Endothelial cell of umbilical vein (primary cell): ENCODE measurements at regions of chr17 and their contacts with region 1.

Region 1: DNA sequence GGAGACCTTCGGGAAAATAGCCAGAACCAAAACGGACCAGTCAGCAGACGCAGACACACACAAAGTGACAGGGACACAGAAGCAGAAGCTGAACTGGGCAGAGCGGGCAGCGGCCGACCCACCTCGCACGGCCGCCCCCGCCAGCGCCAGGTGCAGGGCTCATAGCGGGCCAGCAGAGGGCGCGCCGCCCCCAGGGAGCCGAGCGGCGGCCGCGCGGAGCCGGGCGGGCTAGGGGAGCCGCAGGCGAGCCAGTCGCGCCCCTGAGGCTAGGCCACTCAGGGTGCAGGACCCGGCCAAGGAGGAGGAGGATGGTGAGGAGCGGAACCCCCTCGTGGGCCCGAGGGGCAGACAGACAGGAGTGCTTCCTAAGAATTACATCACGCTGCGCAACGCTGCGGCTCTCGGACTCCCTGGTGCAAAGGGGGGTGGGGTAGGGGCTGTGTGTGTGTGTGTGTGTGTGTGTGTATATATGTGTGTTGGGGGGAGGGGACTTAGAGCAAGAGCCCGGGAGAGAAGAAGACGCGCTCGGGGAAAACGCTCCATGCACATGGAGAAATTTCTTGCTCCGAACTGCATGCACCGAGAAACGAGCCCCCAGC is 913 bp upstream of the NOG start:
- DNase-seq: peak; percentile 45
- H3K4me3 ChIP-seq: peak overlapping the region; percentile 46 to 66 (median 48)
- H3K27ac ChIP-seq: no peak overlapping the region
- H3K4me1 ChIP-seq: peaks cover 21% of the 10 kb centered on the region
- H3K27me3 ChIP-seq: peaks cover 41 to 54% of the 10 kb centered on the region in 2 experiments
- CTCF ChIP-seq: peak; percentile 77 to 88
- POLR2A ChIP-seq: no peak

Region 2: GRCh38 chr17:56499799-56500388 is 92.7 kb before region 1 on chr17:
- CTCF ChIA-PET with region 1: interaction called, 12 read pairs
- POLR2A ChIA-PET with region 1: no interaction called
- dilution Hi-C with region 1: no loop called
- intact Hi-C with region 1: loop called (anchors 5 kb)
- DNase-seq: peak; percentile 47
- H3K4me3 ChIP-seq: no peak overlapping the region
- H3K27ac ChIP-seq: no peak overlapping the region
- H3K4me1 ChIP-seq: no peaks in the 10 kb centered on the region
- H3K27me3 ChIP-seq: peaks cover 2 to 9% of the 10 kb centered on the region in 2 experiments
- CTCF ChIP-seq: peak; percentile 25 to 33
- POLR2A ChIP-seq: no peak

Region 3: GRCh38 chr17:56679115-56679766 is 86.7 kb after region 1 on chr17:
- CTCF ChIA-PET with region 1: interaction called, 10 read pairs
- POLR2A ChIA-PET with region 1: no interaction called
- dilution Hi-C with region 1: no loop called
- intact Hi-C with region 1: loop called (anchors 1 kb)
- DNase-seq: peak; percentile 54
- H3K4me3 ChIP-seq: peak overlapping the region; percentile 19 to 58 (median 21)
- H3K27ac ChIP-seq: no peak overlapping the region
- H3K4me1 ChIP-seq: peaks cover 32% of the 10 kb centered on the region
- H3K27me3 ChIP-seq: peaks cover 27 to 38% of the 10 kb centered on the region in 2 experiments
- CTCF ChIP-seq: peak; percentile 60 to 61
- POLR2A ChIP-seq: no peak

Region 4: DNA sequence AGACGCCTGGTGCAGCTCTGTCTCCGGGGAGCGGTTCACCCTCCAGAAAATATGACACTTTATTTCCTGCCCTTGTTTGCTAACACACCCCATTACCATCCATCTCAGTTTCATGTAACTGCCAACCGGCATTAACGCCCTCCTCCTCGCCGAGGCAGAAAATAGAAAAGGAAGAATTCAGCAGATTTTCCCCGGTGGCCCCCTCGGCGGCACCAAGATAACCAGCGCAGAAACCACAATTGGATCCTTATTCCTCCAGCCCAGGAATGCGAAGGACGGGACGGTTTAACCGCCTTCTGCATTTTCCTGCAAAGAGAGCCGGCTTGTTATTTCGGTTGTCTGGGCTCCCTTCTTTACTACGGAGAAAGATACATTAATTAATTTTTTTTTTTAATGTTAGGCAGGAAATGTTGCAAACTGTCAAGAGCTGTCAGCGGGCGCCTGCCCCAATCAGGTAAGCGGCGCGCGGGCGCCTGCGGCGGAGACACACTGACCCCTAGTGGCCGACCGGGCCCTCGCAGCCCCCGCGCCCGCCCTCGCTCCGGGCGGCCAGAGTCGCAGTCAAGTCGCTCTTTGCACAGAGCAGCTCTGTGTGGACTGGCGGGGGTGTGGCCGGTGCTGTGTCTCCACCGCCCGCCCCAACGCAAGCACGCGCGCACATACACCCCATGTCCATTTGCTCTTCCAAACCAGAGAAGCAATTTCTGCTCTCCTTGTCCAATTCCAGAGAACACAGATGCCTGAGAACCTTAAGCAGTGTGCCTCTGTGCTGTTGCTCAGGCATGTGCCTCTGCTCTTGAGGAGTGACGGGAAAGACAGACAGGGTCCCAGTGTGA is 187.5 kb after region 1 on chr17:
- CTCF ChIA-PET with region 1: interaction called, 70 read pairs
- POLR2A ChIA-PET with region 1: interaction called, 6 read pairs
- dilution Hi-C with region 1: no loop called
- intact Hi-C with region 1: loop called (anchors 1 kb)
- DNase-seq: peak; percentile 79
- H3K4me3 ChIP-seq: peak overlapping the region in 2 of 3 experiments; percentile 23 to 54
- H3K27ac ChIP-seq: no peak overlapping the region
- H3K4me1 ChIP-seq: peaks cover 11% of the 10 kb centered on the region
- H3K27me3 ChIP-seq: peaks cover 0 to 5% of the 10 kb centered on the region in 2 experiments
- CTCF ChIP-seq: peak; percentile 96 to 99
- POLR2A ChIP-seq: no peak

Region 5: GRCh38 chr17:56960596-56961538 is 368.3 kb after region 1 on chr17 and contains the start of gene COIL:
- CTCF ChIA-PET with region 1: no interaction called
- POLR2A ChIA-PET with region 1: no interaction called
- dilution Hi-C with region 1: no loop called
- intact Hi-C with region 1: loop called (anchors 5 kb)
- DNase-seq: peak; percentile 90
- H3K4me3 ChIP-seq: peak within 1 kb of the TSS; percentile 73 to 98 (median 88)
- H3K27ac ChIP-seq: peak within 1 kb of the TSS; percentile 84
- H3K4me1 ChIP-seq: peaks cover 2% of the 10 kb centered on the region
- H3K27me3 ChIP-seq: no peaks in the 10 kb centered on the region
- CTCF ChIP-seq: peak; percentile 99
- POLR2A ChIP-seq: peak; percentile 49
- total RNA-seq, gene COIL: 17.6 and 20.6 TPM in 2 replicates